BJ (cell line): ENCODE measurements at regions of chr12 and their contacts with region 1.

Region 1: DNA sequence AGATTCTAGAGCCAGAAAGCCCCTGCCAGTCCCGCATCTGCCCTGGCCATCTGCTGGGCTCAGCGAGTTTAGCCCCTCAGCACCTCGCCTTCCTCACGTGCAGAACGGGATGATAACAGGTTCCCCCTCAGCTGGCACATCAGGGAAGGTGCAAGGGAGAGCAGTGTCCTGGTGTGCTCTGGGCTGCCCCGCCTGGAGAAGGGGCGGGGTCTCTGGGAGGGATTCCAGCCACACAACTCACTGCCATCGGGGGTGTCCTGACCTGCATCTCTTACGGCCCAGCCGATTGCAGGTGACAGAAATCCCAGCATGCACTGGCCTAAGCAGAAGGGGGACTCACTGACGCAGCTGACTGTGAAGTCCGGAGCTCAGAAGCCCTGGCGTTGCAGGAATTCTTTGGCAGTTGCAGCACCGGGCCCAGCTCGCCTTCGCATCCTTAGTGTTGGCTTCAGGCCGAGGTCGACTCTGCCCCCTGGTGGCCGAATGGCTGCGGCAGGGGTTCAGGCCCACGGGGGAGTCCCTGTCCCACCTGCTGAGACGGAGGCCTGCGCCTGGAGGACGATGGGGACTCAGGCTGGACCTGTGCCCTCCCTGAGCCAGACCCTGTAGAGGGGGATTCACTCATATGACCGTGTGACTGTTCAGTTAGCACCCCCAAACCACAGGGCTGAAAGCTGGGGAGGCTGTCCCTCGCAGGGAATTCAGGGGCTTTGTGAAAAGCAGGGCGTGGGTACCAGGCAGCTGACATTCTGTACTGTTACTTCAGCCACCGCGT is 178.6 kb downstream of the ADGRD1 start:
- DNase-seq: no peak
- H3K4me3 ChIP-seq: no peak overlapping the region
- H3K27me3 ChIP-seq: no peaks in the 10 kb centered on the region; the same call in 1 of the 2 replicates
- CTCF ChIP-seq: peak; percentile 80

Region 2: DNA sequence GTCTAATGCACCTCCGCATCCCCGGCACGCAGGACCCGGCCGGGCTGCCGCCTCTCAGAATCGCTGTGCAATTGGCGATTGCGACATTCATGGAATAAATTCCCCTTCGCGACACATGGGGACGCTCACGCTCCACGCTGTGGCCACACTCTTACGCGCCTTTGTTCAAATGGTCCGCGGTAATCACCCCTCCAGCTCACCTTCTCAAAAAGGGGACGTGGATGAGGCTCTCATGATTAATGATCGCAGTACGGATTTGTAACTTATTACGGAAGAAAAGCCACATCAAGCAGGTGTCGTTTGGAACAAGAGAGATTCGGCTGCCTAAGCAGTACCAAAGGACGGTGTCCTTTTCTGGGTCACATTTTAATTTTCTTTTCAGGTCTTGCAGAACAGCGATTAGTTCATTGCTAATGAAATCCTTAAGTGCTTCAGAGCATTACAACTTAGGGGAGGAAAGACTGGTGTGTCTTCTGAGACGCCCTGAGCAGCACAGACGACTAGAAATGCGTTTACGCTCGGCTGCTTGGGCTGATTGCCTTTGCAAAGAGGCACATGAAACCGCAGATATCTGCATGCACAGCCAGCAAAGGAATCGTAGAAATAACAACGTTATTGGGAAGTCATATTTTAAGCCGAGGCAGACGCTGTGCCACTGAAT is 215.9 kb before region 1 on chr12:
- CTCF ChIA-PET with region 1: interaction called, 30 read pairs
- POLR2A ChIA-PET with region 1: no interaction called
- DNase-seq: no peak
- H3K4me3 ChIP-seq: peak overlapping the region; percentile 9
- H3K27me3 ChIP-seq: no peaks in the 10 kb centered on the region
- CTCF ChIP-seq: peak; percentile 99

Region 3: GRCh38 chr12:131116391-131117117 is 15.8 kb before region 1 on chr12:
- CTCF ChIA-PET with region 1: interaction called, 114 read pairs
- POLR2A ChIA-PET with region 1: interaction called, 3 read pairs
- DNase-seq: peak; percentile 49
- H3K4me3 ChIP-seq: no peak overlapping the region
- H3K27me3 ChIP-seq: no peaks in the 10 kb centered on the region; the same call in 1 of the 2 replicates
- CTCF ChIP-seq: peak; percentile 62

Region 4: GRCh38 chr12:131142891-131143657 is 10.8 kb after region 1 on chr12:
- CTCF ChIA-PET with region 1: interaction called, 12 read pairs
- POLR2A ChIA-PET with region 1: no interaction called
- DNase-seq: no peak
- H3K4me3 ChIP-seq: no peak overlapping the region
- H3K27me3 ChIP-seq: no peaks in the 10 kb centered on the region
- CTCF ChIP-seq: no peak

Region 5: GRCh38 chr12:131825146-131825892 is 693.0 kb after region 1 on chr12:
- CTCF ChIA-PET with region 1: interaction called, 3 read pairs
- POLR2A ChIA-PET with region 1: interaction called, 49 read pairs
- DNase-seq: no peak
- H3K4me3 ChIP-seq: no peak overlapping the region; the same call in 1 of the 2 replicates
- H3K27me3 ChIP-seq: no peaks in the 10 kb centered on the region
- CTCF ChIP-seq: no peak